ENCODE measurements at regions of chr6 and their contacts with region 1.

Region 1: DNA sequence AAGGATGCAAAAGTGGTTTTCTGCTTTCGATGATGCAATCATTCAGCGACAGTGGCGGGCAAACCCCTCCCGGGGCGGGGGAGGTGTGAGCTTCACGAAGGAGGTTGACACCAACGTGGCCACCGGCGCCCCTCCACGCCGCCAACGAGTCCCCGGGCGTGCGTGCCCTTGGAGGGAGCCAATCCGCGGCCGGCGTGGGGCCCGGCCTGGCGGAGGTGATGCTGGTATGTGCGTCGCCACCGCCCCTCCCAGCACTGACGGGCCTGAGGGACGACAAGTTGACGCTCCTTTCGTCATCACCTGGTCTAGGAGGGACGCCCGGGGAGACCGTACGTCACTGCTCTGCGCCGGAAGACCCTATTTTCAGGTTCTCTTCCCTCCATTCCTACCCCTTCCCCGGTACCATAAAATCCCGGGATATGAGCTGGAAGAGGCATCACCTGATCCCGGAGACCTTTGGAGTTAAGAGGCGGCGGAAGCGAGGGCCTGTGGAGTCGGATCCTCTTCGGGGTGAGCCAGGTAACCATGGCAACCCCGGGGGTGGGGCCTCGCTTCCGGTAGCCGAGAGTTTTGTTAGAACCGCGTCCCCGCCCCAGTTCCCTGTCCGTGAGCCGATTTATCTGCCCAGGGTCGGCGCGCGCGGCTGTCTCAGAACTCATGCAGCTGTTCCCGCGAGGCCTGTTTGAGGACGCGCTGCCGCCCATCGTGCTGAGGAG is at the start of gene DXO:
- DNase-seq: peak; percentile 92 to 99
- H3K4me3 ChIP-seq: peak within 1 kb of the TSS; percentile 78 to 80
- H3K27ac ChIP-seq: peak within 1 kb of the TSS; percentile 92 to 99
- H3K4me1 ChIP-seq: peaks cover 10 to 16% of the 10 kb centered on the region in 2 donors
- H3K27me3 ChIP-seq: no peaks in the 10 kb centered on the region
- CTCF ChIP-seq: no peak
- total RNA-seq, gene DXO: 18.0 TPM

Region 2: DNA sequence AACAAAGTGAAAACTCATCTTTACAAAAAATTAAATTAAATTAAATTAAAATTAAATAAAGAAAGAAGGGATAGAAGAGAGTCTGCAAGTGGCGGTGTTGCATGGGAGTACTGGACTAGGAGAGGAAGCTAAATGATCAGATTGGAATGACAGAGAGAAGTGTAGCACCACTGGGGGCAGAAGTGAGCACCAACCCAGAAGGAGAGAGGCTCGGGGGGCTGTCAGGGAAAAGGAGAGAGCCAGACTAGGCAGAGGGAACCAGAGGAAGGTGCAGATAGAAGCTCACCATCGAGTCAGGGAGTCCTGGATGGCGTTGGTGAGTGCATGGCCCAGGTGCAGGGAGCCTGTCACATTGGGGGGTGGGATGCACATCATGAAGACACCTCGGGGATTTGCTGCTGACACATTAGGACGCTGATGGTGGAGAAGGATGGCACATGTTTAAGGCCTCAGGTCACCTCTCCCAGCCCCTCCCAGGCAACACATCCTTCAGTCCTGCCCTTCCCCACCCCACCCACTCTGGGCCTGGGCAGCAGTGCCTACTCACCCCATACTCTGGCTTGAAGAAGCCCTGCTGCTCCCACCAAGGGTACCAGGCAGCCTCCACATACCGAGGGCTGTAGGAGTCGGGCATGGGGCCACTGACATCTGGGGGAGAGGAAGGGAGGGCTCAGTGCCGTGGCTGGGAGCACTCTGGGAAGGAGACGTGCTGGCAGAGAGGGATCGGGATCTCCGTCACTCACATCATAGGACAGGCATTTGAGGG is 180.6 kb before region 1 on chr6:
- intact Hi-C with region 1: no loop called
- DNase-seq: no peak
- H3K4me3 ChIP-seq: no peak overlapping the region
- H3K27ac ChIP-seq: no peak overlapping the region
- H3K4me1 ChIP-seq: peaks cover 4 to 13% of the 10 kb centered on the region in 2 donors
- H3K27me3 ChIP-seq: no peaks in the 10 kb centered on the region
- CTCF ChIP-seq: peak in 2 of 3 experiments; percentile 50 to 58

Region 3: DNA sequence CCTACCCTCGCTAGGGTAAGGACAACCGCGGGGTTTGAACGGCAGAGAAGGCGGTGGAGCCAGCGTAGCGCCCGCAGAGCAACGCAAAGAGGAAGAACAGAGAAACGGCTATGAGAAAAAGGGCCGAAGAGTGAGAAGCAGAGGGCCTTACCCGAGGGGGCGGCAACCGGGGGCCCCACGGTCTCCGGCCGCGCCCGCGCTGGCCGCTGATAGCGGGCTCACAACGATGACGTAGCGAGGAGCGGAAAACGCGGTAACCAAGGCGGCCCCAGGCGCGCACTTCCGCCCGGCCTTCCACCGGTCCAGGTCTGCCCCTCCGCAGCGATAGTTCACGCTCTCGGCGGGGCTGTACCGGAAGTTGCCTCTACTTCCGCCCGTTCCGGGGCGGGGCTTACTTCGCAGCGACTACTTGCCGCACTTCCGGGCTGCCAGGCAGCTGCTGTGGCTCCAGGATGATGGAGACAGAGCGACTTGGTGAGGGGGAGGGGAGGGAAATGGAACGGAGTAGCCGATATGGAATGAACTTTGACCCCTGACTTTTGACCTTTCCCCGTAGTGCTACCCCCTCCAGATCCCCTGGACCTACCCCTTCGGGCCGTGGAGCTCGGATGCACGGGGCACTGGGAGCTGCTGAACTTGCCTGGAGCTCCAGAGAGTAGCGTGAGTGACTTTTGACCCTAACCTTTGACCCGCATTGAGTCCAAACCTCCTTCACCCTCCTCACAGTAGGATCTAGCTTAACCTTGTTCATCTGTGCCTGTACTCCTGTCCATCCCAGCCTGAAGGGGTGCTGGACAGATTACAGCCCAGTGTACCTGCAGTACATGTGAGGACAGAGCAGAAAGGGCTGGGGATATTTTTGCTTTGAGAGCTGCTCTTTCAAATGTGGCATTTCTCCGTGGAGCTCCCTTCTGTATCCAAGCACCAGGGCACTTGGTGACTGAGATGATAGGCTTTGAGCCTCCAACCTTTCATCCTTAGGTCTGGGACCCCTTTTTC is 13.1 kb before region 1 on chr6 and contains the starts of genes NELFE and SKIC2:
- intact Hi-C with region 1: loop called (anchors 1 kb)
- DNase-seq: peak; percentile 92 to 99
- H3K4me3 ChIP-seq: peak within 1 kb of the TSS; percentile 78 to 96
- H3K27ac ChIP-seq: peak within 1 kb of the TSS; percentile 85 to 88
- H3K4me1 ChIP-seq: peaks cover 3 to 23% of the 10 kb centered on the region in 2 donors
- H3K27me3 ChIP-seq: no peaks in the 10 kb centered on the region
- CTCF ChIP-seq: no peak
- total RNA-seq, gene NELFE: 208 TPM
- total RNA-seq, gene SKIC2: 77.4 TPM

Measured in ascending aorta (tissue), 2 donors.